Astrocyte of the cerebellum (primary cell): ENCODE measurements at regions of chr14 and their contacts with region 1.

Region 1: GRCh38 chr14:27085500-27085899 is 487.7 kb upstream of the NOVA1 start:
- DNase-seq: no peak
- H3K4me3 ChIP-seq: no peak overlapping the region
- CTCF ChIP-seq: no peak

Region 2: DNA sequence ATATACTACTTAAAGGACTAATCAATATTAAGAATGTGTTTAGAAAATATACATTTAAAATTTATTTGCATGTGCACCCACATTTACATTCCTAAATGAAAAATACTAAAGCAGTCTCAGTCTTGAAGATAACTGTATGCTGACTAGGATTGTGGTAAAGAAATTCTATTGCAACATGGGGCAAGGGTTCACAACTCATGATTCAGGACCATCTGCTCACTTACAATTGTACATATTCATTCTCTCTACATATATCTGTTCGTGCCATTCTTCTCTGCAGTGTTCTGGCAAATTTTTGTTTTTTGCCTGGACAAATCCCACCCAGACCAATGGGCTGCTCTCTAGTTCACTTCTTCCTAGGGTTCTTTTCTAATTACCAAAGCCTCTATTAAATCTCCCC is 70.4 kb before region 1 on chr14:
- in situ Hi-C with region 1: no loop called
- DNase-seq: no peak
- H3K4me3 ChIP-seq: no peak overlapping the region
- CTCF ChIP-seq: no peak

Region 3: DNA sequence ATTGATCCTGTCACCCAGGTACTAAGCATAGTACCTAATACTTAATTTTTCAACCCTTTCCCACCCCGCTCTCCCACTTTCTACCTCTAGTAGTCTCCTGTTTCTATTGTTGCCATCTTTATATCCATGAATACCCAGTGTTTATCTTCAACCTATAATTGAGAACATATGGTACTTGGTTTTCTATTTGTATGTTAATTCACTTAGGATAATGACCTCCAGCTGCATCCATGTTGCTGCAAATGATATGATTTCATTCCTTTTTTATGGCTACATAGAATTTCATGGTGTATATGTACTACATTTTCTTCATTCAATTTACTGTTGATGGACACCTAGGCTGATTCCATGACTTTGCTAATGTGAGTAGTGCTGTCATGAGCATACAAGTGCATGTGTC is 59.7 kb after region 1 on chr14:
- in situ Hi-C with region 1: no loop called
- DNase-seq: no peak
- H3K4me3 ChIP-seq: no peak overlapping the region
- CTCF ChIP-seq: no peak

Region 4: GRCh38 chr14:27164139-27164538 is 78.6 kb after region 1 on chr14:
- in situ Hi-C with region 1: loop called (anchors 5 kb)
- DNase-seq: no peak
- H3K4me3 ChIP-seq: no peak overlapping the region
- CTCF ChIP-seq: no peak

Region 5: GRCh38 chr14:27175489-27175888 is 90.0 kb after region 1 on chr14:
- in situ Hi-C with region 1: no loop called
- DNase-seq: no peak
- H3K4me3 ChIP-seq: no peak overlapping the region
- CTCF ChIP-seq: no peak